Activated CD8-positive, alpha-beta T cell treated with anti-CD3 and anti-CD28 coated beads for 36 hours (primary cell): ENCODE measurements at regions of chr16 and their contacts with region 1.

Region 1: GRCh38 chr16:87636072-87636684 is 33.9 kb downstream of the JPH3 start:
- DNase-seq: peak; percentile 93
- ATAC-seq: peak; percentile 91
- H3K4me3 Mint-ChIP-seq: peak overlapping the region; percentile 63
- H3K27ac Mint-ChIP-seq: no peak overlapping the region
- H3K4me1 Mint-ChIP-seq: peaks cover 17% of the 10 kb centered on the region
- H3K27me3 Mint-ChIP-seq: no peaks in the 10 kb centered on the region
- CTCF ChIP-seq: peak; percentile 80

Region 2: DNA sequence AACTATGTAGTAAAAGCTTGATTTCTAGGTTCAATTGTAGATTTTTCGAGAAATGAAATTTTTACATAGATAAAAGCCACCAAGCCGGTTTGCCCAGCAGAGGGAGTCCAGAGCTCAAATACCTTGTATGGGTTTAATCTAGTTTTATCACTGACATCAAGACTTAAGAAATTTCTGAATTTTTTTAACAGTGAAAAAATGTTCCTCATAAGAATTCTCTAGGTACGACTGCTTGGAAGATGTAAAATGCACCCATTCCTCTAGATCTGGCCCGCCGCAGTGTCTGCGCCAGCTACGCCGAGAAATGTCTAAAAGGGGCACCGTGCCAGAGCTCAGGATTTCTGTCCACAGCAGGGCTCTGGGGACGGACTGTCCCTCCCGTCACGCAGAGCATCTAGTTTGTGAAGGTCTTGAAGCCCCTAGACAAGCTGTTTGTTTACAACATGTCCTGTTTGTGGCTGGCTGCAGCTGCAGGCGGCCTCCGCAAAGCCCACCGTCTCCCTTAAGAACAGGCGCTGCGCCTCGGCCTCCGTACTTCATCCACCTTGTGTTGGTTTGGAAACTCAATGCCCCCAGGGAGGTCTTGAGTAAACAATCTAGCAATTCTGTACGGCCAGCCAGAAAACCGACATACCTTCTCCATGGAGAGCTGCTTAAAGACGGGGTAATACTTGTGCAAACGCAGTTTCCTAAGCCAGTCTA is 219.2 kb before region 1 on chr16:
- CTCF ChIA-PET with region 1: interaction called, 42 read pairs
- POLR2A ChIA-PET with region 1: no interaction called
- intact Hi-C with region 1: loop called (anchors 5 kb)
- DNase-seq: peak; percentile 71
- ATAC-seq: no peak
- H3K4me3 Mint-ChIP-seq: no peak overlapping the region
- H3K27ac Mint-ChIP-seq: no peak overlapping the region
- H3K4me1 Mint-ChIP-seq: no peaks in the 10 kb centered on the region
- H3K27me3 Mint-ChIP-seq: no peaks in the 10 kb centered on the region
- CTCF ChIP-seq: peak; percentile 76

Region 3: GRCh38 chr16:87543436-87544191 is 92.6 kb before region 1 on chr16:
- CTCF ChIA-PET with region 1: interaction called, 11 read pairs
- POLR2A ChIA-PET with region 1: interaction called, 3 read pairs
- intact Hi-C with region 1: no loop called
- DNase-seq: peak; percentile 43
- ATAC-seq: peak; percentile 39
- H3K4me3 Mint-ChIP-seq: no peak overlapping the region
- H3K27ac Mint-ChIP-seq: no peak overlapping the region
- H3K4me1 Mint-ChIP-seq: peaks cover 5% of the 10 kb centered on the region
- H3K27me3 Mint-ChIP-seq: peaks cover 25% of the 10 kb centered on the region
- CTCF ChIP-seq: no peak

Region 4: GRCh38 chr16:87571136-87571867 is 64.9 kb before region 1 on chr16:
- CTCF ChIA-PET with region 1: interaction called, 25 read pairs
- POLR2A ChIA-PET with region 1: no interaction called
- intact Hi-C with region 1: no loop called
- DNase-seq: peak; percentile 57
- ATAC-seq: peak; percentile 77
- H3K4me3 Mint-ChIP-seq: no peak overlapping the region
- H3K27ac Mint-ChIP-seq: no peak overlapping the region
- H3K4me1 Mint-ChIP-seq: no peaks in the 10 kb centered on the region
- H3K27me3 Mint-ChIP-seq: peaks cover 3% of the 10 kb centered on the region
- CTCF ChIP-seq: peak; percentile 54

Region 5: GRCh38 chr16:87621976-87622713 is 14.0 kb before region 1 on chr16:
- CTCF ChIA-PET with region 1: interaction called, 26 read pairs
- POLR2A ChIA-PET with region 1: no interaction called
- intact Hi-C with region 1: no loop called
- DNase-seq: no peak
- ATAC-seq: no peak
- H3K4me3 Mint-ChIP-seq: no peak overlapping the region
- H3K27ac Mint-ChIP-seq: no peak overlapping the region
- H3K4me1 Mint-ChIP-seq: no peaks in the 10 kb centered on the region
- H3K27me3 Mint-ChIP-seq: peaks cover 2% of the 10 kb centered on the region
- CTCF ChIP-seq: no peak